H1 (cell line): ENCODE measurements at regions of chr1 and their contacts with region 1.

Region 1: DNA sequence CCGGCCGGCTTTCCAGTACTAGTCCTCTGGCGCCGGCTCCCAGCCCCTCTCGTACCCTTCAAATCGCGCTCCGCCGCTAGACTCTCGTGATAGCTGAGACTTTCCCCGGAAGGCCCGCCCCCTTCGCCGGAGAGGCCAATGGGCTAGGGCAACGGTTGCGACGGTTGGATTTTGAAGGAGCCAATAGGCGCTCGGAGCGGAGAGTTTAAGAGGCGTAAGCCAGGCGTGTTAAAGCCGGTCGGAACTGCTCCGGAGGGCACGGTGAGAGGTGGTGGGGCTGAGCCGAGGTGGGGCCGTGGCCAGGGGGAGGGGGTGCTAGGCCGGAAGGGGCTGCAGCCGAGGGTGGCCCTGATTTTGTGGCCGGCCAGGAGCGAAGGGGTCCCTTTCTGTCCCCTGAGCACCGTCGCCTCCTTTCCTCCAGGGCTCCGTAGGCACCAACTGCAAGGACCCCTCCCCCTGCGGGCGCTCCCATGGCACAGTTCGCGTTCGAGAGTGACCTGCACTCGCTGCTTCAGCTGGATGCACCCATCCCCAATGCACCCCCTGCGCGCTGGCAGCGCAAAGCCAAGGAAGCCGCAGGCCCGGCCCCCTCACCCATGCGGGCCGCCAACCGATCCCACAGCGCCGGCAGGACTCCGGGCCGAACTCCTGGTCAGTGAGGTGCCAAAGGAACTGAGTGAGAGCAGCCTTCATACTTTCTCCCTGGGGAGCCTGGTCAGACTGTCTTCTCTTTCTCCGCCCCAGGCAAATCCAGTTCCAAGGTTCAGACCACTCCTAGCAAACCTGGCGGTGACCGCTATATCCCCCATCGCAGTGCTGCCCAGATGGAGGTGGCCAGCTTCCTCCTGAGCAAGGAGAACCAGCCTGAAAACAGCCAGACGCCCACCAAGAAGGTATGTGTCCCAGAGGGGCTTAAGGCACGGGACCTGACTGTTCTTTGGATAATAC is at the start of gene CDC20:
- DNase-seq: peak; percentile 93 to 99
- H3K4me3 ChIP-seq: peak within 1 kb of the TSS; percentile 76 to 92 (median 87)
- H3K27ac ChIP-seq: peak within 1 kb of the TSS; percentile 87
- H3K4me1 ChIP-seq: peaks cover 5 to 14% (median 8%) of the 10 kb centered on the region in 4 experiments
- H3K27me3 ChIP-seq: no peaks in the 10 kb centered on the region
- CTCF ChIP-seq: no peak
- EP300 ChIP-seq: peak in 1 of 2 experiments; percentile 40; a peak in 1 of 3 replicates
- POLR2A ChIP-seq: peak; percentile 93 to 95
- RAD21 ChIP-seq: no peak
- total RNA-seq, gene CDC20: 221 and 252 TPM in 2 replicates

Region 2: DNA sequence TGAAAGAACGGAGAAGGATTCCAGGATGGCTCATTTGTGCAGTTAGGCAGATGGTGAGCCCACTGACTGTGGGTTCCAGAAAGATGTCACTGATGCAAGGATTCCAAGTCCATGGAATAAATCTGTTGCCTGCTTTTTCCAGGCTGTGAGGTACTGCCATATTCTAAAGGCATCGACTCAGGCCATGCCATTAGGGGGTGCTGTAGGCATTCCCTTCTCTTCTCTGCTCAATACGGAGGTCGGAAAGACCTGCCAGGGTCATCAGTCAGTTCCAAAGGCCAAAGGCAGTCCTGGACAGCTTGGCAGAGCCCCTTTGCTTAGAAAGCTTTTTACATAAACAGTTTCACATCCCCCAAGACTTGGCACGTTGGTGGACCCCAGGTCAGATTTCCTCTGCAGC is 120.9 kb before region 1 on chr1:
- CTCF ChIA-PET with region 1: interaction called, 7 read pairs
- POLR2A ChIA-PET with region 1: interaction called, 15 read pairs
- DNase-seq: peak; percentile 36 to 79
- H3K4me3 ChIP-seq: no peak overlapping the region
- H3K27ac ChIP-seq: no peak overlapping the region
- H3K4me1 ChIP-seq: no peaks in the 10 kb centered on the region
- H3K27me3 ChIP-seq: no peaks in the 10 kb centered on the region
- CTCF ChIP-seq: peak; percentile 57 to 97 (median 90)
- EP300 ChIP-seq: no peak
- POLR2A ChIP-seq: no peak
- RAD21 ChIP-seq: peak; percentile 98

Region 3: DNA sequence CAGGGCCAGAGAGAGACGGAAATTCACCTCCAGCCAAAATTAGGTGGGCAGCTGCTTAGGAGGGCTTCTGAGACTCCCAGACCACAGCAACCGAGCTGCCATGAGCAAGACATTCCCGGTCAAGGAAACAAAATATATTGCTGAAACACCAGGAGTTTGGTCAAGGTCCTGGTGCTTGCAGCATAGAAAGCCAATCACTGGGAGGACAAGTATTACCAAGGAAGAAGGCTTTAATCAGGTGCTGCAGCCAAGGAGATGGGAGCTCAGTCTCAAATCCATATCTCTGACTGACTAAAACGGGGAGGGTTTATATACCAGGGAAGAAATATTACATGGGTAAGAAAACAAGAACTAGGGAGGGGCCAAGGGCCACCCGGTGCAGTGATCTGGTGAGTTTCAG is 108.0 kb before region 1 on chr1:
- CTCF ChIA-PET with region 1: no interaction called
- POLR2A ChIA-PET with region 1: no interaction called
- DNase-seq: no peak
- H3K4me3 ChIP-seq: no peak overlapping the region
- H3K27ac ChIP-seq: no peak overlapping the region
- H3K4me1 ChIP-seq: no peaks in the 10 kb centered on the region
- H3K27me3 ChIP-seq: no peaks in the 10 kb centered on the region
- CTCF ChIP-seq: no peak
- EP300 ChIP-seq: no peak
- POLR2A ChIP-seq: no peak
- RAD21 ChIP-seq: no peak

Region 4: GRCh38 chr1:43285269-43285990 is 73.6 kb before region 1 on chr1 and contains the start of gene C1orf210:
- CTCF ChIA-PET with region 1: interaction called, 15 read pairs
- POLR2A ChIA-PET with region 1: interaction called, 19 read pairs
- DNase-seq: peak; percentile 71 to 93
- H3K4me3 ChIP-seq: peak within 1 kb of the TSS; percentile 41 to 64 (median 60)
- H3K27ac ChIP-seq: peak within 1 kb of the TSS; percentile 7; the same call in 1 of the 2 replicates
- H3K4me1 ChIP-seq: peaks cover 0 to 15% (median 12%) of the 10 kb centered on the region in 4 experiments; a peak in 6 of 7 replicates
- H3K27me3 ChIP-seq: no peaks in the 10 kb centered on the region; a peak in 1 of 7 replicates
- CTCF ChIP-seq: peak; percentile 58 to 71 (median 68)
- EP300 ChIP-seq: no peak
- POLR2A ChIP-seq: no peak; a peak in 1 of 3 replicates
- RAD21 ChIP-seq: peak; percentile 38 to 40; a peak in 2 of 4 replicates
- total RNA-seq, gene C1orf210: 10.6 and 12.0 TPM in 2 replicates

Region 5: GRCh38 chr1:43348809-43349583 is 10.0 kb before region 1 on chr1:
- CTCF ChIA-PET with region 1: interaction called, 8 read pairs
- POLR2A ChIA-PET with region 1: interaction called, 37 read pairs
- DNase-seq: peak; percentile 88 to 99
- H3K4me3 ChIP-seq: peak overlapping the region; percentile 68 to 74 (median 71)
- H3K27ac ChIP-seq: peak overlapping the region; percentile 93
- H3K4me1 ChIP-seq: peaks cover 4 to 15% (median 9%) of the 10 kb centered on the region in 4 experiments; a peak in 6 of 7 replicates
- H3K27me3 ChIP-seq: peaks cover 0 to 5% (median 0%) of the 10 kb centered on the region in 4 experiments; a peak in 2 of 7 replicates
- CTCF ChIP-seq: no peak
- EP300 ChIP-seq: no peak
- POLR2A ChIP-seq: peak; percentile 58 to 95
- RAD21 ChIP-seq: no peak; a peak in 1 of 4 replicates

Region 6: GRCh38 chr1:43389326-43390313 is 30.6 kb after region 1 on chr1 and contains the starts of genes MED8 and SZT2:
- CTCF ChIA-PET with region 1: interaction called, 4 read pairs
- POLR2A ChIA-PET with region 1: interaction called, 19 read pairs
- DNase-seq: peak; percentile 93 to 96
- H3K4me3 ChIP-seq: peak within 1 kb of the TSS; percentile 78 to 92 (median 85)
- H3K27ac ChIP-seq: peak within 1 kb of the TSS; percentile 5; the same call in 1 of the 2 replicates
- H3K4me1 ChIP-seq: peaks cover 0 to 8% (median 4%) of the 10 kb centered on the region in 4 experiments; a peak in 4 of 7 replicates
- H3K27me3 ChIP-seq: no peaks in the 10 kb centered on the region
- CTCF ChIP-seq: no peak
- EP300 ChIP-seq: no peak
- POLR2A ChIP-seq: peak in 1 of 2 experiments; percentile 49; a peak in 1 of 3 replicates
- RAD21 ChIP-seq: no peak; a peak in 1 of 4 replicates
- total RNA-seq, gene MED8: 19.5 and 20.6 TPM in 2 replicates
- total RNA-seq, gene SZT2: 12.9 and 13.8 TPM in 2 replicates

Region 7: DNA sequence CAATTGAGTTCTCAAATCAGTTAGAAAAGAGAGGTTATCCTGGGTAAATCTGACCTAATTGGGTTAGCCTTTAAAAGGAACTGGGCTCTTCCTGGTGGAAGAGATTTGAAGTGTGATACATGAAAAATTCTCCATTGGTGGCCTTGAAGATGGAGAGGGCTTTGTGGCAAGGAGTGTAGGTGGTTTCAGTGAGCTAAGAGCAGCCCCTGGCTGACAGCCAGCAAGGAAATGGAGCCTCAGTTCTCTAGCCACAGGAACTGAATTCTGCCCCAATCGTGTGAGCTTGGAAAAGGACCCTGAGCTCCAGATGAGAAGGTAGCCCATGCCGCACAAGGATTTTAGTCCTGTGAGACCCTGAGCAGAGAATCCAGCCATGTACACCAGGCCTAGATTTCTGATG is 107.4 kb after region 1 on chr1:
- CTCF ChIA-PET with region 1: no interaction called
- POLR2A ChIA-PET with region 1: no interaction called
- DNase-seq: no peak
- H3K4me3 ChIP-seq: no peak overlapping the region
- H3K27ac ChIP-seq: no peak overlapping the region
- H3K4me1 ChIP-seq: no peaks in the 10 kb centered on the region
- H3K27me3 ChIP-seq: no peaks in the 10 kb centered on the region
- CTCF ChIP-seq: no peak
- EP300 ChIP-seq: no peak
- POLR2A ChIP-seq: no peak
- RAD21 ChIP-seq: no peak